Ascending aorta (tissue), 2 donors: ENCODE measurements at regions of chr5 and their contacts with region 1.

Region 1: DNA sequence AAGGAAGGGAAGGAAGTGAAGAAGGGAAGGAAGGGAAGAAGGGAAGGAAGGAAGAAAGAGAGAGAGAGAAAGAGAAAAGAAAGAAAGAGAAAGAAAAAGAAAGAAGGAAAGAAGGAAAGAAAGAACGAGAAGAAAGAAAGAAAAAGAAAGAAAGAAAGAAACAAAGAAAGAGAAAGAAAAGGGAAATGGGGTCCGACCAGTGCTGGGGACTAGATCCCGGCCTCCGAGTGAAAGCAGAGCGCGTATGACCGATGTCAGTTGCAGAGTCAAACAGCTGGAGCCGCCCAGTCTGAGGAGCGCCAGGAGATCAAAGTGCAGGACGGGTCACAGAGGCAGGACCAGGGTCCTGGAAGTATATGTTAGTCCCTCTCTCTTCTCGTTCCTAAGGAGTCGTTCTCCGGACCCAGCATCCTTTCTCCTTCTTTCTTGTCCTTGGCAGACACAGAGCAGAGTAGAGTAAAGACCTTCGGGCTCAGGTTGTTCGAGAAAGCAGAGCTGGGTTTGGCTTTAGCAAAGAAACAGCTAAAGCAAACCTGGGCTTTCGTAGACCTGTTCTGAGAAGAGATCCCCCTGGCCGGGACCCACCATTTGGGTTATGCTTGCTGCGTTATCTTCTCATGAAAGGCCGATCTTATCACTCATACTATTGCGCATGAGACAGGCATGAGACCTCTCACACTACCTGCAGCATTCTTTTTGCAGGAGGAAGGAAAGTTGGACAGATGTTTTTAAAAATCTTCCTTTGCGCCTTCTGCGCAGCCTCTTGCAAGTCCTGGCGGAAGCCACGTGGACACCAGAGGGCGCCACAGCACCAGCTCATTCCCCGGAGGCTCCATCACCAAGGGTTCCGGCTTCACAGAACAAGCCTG is 305.2 kb upstream of the MSX2 start:
- DNase-seq: peak; percentile 38 to 92
- H3K4me3 ChIP-seq: peak overlapping the region; percentile 18 to 51
- H3K27ac ChIP-seq: peak overlapping the region in 1 of 2 donors; percentile 49
- H3K4me1 ChIP-seq: peaks cover 0 to 5% of the 10 kb centered on the region in 2 donors
- H3K27me3 ChIP-seq: no peaks in the 10 kb centered on the region
- CTCF ChIP-seq: peak; percentile 74 to 91 (median 88)

Region 2: DNA sequence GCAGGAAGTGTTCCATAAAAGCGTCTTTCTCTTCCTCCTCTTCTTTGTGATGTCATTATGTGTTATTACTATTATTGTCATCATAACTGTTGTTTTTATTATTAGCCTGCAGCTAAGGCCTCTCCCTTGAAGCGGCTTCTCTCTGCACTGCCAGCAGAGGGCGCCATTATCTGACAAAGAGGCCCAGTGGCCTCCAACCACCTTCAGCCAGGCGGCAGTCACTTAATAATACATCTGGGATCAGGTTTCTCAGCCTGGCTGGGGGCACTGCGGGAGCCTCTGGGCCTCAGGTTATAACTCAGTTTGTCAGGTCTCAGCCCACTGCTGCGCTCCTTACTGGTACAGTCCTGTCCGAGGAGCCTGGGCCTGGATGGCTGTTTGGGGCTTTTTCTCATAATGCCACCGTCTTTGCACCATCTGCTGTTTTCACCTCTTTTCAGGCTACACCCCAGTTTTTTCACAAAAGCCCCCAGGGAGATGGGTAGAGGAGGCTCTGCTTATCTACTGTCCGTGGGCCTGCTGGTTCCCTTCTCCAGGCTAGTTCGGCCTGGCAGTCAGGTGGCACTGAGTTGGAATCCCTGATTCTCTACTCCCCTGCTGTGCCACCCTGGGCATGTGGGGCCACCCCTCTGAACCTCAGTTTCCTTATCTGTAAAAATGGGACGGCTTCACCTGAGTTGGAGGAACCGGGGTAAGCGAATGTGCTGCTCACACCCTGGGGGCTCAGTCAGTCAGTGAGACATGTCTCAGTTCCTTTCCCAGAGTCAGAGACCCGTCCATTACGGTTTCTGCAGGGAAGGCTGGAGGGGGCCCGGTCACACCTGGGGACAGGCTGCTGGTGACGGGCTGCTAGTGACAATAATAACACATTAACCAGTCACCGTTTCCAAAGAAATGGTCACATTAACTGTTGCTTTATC is 91.6 kb before region 1 on chr5:
- intact Hi-C with region 1: loop called (anchors 5 kb)
- DNase-seq: peak in 1 of 2 donors; percentile 53
- H3K4me3 ChIP-seq: no peak overlapping the region
- H3K27ac ChIP-seq: no peak overlapping the region
- H3K4me1 ChIP-seq: no peaks in the 10 kb centered on the region
- H3K27me3 ChIP-seq: no peaks in the 10 kb centered on the region
- CTCF ChIP-seq: peak; percentile 32 to 70 (median 57)

Region 3: DNA sequence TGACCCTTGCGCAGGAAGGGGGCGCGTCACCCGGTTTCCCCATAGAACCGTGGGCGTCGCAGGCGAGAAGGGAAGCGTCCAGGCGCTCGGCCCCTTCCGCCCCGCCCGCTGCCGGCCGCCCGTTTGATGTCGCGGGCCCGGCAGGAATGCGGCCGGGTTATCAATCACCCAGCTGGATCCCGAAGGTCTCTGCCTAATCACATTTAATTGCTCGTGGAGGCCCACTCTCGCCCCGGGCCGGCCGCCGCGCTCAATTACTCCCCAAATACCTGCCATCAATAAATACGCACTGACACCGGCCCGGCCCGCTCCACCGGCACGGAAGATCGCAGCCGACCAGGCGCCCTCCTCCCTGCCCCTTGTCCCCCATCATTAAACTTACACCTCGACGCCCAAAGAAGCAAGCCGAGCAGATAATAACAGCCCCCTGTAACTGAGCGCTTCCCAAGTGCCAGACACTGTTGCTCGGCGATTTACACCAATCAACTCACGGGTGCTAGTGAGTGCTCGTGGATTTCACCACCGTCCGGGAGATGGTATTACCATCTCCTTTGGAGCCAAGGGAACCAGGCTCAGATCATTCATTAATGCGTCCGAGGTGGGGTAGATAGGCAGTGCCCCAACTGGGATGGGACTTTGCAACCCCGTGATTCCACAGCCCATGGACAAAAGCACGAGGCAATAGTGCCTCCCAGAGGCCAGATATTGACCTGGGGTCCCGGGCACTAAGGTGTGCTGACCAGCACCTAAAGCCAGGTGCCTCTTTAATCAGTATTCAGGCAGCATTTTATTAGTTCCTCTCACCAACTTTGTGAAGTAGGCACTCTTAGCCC is 316.6 kb after region 1 on chr5:
- intact Hi-C with region 1: loop called (anchors 5 kb)
- DNase-seq: no peak
- H3K4me3 ChIP-seq: peak overlapping the region in 1 of 2 donors; percentile 4
- H3K27ac ChIP-seq: no peak overlapping the region
- H3K4me1 ChIP-seq: no peaks in the 10 kb centered on the region
- H3K27me3 ChIP-seq: peaks cover 9% of the 10 kb centered on the region
- CTCF ChIP-seq: peak in 2 of 3 experiments; percentile 4 to 17

Region 4: DNA sequence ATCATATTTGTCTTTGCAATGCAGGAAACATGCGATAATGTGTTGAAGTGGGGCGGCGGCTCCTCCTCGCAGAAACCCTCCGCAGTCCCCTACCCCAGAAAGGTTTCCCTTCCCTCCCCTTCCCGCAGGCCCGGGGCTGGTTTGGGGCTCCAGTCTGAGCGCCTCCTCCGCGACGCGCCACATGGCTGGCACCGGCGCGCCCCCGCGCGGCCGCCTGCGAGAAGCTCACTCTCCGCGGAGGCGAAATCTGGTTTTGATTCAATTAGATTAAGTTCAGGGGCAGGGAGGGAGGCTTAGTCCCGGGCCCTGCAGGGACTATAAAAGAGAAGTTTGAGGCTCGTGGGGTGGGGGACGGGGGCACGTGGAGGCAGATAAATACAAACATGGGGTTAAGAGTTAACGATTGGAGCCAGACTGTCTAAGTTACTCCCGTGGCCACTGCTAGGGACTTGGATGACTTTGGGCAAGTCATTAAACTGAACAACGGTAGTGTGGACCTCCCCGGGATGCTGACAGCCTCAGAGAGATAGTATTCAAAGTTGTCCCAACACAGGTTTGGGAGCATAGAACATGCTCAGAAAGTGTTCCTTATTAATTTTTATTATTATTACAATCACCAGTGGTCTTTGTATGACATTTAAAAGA is 374.6 kb after region 1 on chr5:
- intact Hi-C with region 1: loop called (anchors 1 kb)
- DNase-seq: peak in 1 of 2 donors; percentile 61
- H3K4me3 ChIP-seq: no peak overlapping the region
- H3K27ac ChIP-seq: no peak overlapping the region
- H3K4me1 ChIP-seq: no peaks in the 10 kb centered on the region
- H3K27me3 ChIP-seq: no peaks in the 10 kb centered on the region
- CTCF ChIP-seq: peak; percentile 65 to 92 (median 83)

Region 5: GRCh38 chr5:174935854-174936474 is 516.8 kb after region 1 on chr5:
- intact Hi-C with region 1: loop called (anchors 1 kb)
- DNase-seq: no peak
- H3K4me3 ChIP-seq: no peak overlapping the region
- H3K27ac ChIP-seq: no peak overlapping the region
- H3K4me1 ChIP-seq: no peaks in the 10 kb centered on the region
- H3K27me3 ChIP-seq: peaks cover 4% of the 10 kb centered on the region
- CTCF ChIP-seq: peak; percentile 26 to 82 (median 79)